AG04449 (cell line): ENCODE measurements at regions of chr1 and their contacts with region 1.

Region 1: GRCh38 chr1:205977402-205978014 is 25.7 kb downstream of the RAB7B start:
- DNase-seq: peak; percentile 66
- H3K4me3 ChIP-seq: no peak overlapping the region
- CTCF ChIP-seq: peak; percentile 94

Region 2: GRCh38 chr1:205354259-205354904 is 623.1 kb before region 1 on chr1:
- CTCF ChIA-PET with region 1: no interaction called
- POLR2A ChIA-PET with region 1: no interaction called
- DNase-seq: no peak
- H3K4me3 ChIP-seq: no peak overlapping the region
- CTCF ChIP-seq: peak; percentile 73

Region 3: DNA sequence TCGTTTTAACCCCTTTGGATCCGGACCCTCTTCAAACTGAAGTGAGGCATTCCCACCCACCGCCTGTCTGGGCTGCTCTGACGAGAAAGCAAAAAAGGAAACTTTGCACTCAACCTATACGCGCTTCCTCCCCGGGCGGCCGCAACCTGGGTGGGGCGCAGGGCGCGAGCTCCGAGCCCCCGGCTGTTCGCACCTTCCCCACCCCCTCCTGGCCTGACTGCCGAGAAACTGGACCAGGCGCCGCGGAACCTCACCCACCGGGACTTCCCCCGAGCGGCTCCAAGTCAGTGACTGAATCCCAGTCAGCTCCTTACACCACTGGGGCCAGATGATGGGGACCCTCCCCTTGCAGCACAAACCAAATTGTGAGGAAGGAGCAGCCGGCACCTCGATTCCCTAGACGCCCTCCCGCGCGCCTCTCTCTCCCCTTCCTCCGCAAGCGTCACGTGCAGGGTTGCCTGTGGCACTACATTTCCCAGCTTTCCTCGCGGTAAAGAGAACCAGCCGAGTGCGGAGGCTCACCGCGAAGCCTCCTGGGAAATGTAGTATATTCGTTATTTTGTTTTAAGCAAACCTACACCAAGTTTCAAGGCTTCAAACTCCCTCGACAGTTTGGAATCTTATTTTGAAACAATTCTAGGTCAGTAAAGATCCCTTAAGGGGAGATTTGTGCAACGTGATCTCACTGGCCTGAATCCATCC is 202.3 kb before region 1 on chr1 and contains the start of gene RAB29:
- CTCF ChIA-PET with region 1: interaction called, 16 read pairs
- POLR2A ChIA-PET with region 1: no interaction called
- DNase-seq: no peak
- H3K4me3 ChIP-seq: peak within 1 kb of the TSS; percentile 82
- CTCF ChIP-seq: no peak

Region 4: GRCh38 chr1:205805082-205805712 is 172.3 kb before region 1 on chr1:
- CTCF ChIA-PET with region 1: interaction called, 25 read pairs
- POLR2A ChIA-PET with region 1: no interaction called
- DNase-seq: no peak
- H3K4me3 ChIP-seq: no peak overlapping the region
- CTCF ChIP-seq: no peak

Region 5: GRCh38 chr1:205907794-205908193 is 69.7 kb before region 1 on chr1:
- CTCF ChIA-PET with region 1: interaction called, 992 read pairs
- POLR2A ChIA-PET with region 1: no interaction called
- DNase-seq: no peak
- H3K4me3 ChIP-seq: no peak overlapping the region
- CTCF ChIP-seq: peak; percentile 73

Region 6: DNA sequence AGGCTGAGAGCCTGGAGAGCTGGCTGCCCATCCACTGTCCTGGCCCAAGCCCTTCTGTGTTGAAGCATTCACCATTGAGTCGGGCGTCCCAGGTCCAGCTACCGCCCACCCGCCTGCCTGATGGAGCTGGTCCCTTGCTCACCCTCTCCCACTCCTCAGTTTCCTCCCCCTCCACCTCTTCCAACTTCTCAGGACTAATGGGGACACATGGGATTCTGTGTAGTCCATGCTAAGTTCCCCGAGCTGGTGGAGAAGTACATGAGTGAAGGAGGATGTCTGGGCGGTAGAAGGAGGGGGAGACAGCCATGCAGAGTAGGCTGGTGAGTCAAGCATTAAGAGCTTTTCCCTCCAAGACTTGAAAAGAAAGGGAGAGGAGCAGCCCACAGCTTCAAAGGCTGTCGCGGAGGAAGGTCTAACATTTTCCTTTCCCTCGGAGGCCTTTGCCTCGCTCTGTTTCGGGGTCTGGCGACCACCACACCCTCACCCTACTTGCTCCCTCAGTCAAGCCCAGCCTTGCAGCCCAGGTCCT is 34.8 kb before region 1 on chr1:
- CTCF ChIA-PET with region 1: interaction called, 23 read pairs
- POLR2A ChIA-PET with region 1: no interaction called
- DNase-seq: no peak
- H3K4me3 ChIP-seq: no peak overlapping the region
- CTCF ChIP-seq: no peak

Region 7: DNA sequence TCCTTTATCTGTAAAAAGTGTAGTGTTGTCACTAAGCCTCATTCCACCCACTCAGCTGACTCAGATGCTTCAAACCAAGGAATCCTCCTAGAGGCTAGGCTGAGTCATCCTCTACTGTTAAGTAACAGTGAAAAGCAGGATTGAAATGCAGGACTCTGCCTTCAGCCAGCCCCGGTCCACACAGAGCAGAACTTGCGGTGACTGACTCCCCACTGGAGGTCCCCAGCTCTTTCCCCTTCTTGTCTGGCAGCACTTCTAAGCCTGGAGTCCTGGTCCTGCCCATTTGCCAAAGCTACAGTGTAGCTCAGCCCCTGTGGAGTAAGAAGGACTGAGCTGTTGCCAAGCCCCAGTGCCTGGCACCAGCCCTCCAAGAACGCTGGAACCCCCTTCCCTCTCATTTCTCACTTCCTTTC is 24.0 kb after region 1 on chr1:
- CTCF ChIA-PET with region 1: interaction called, 231 read pairs
- POLR2A ChIA-PET with region 1: interaction called, 3 read pairs
- DNase-seq: peak; percentile 80
- H3K4me3 ChIP-seq: peak overlapping the region; percentile 33
- CTCF ChIP-seq: no peak

Region 8: GRCh38 chr1:206013026-206013795 is 35.7 kb after region 1 on chr1:
- CTCF ChIA-PET with region 1: no interaction called
- POLR2A ChIA-PET with region 1: no interaction called
- DNase-seq: no peak
- H3K4me3 ChIP-seq: no peak overlapping the region
- CTCF ChIP-seq: no peak

Region 9: GRCh38 chr1:206066479-206067171 is 89.1 kb after region 1 on chr1:
- CTCF ChIA-PET with region 1: no interaction called
- POLR2A ChIA-PET with region 1: no interaction called
- DNase-seq: no peak
- H3K4me3 ChIP-seq: no peak overlapping the region
- CTCF ChIP-seq: no peak

Region 10: DNA sequence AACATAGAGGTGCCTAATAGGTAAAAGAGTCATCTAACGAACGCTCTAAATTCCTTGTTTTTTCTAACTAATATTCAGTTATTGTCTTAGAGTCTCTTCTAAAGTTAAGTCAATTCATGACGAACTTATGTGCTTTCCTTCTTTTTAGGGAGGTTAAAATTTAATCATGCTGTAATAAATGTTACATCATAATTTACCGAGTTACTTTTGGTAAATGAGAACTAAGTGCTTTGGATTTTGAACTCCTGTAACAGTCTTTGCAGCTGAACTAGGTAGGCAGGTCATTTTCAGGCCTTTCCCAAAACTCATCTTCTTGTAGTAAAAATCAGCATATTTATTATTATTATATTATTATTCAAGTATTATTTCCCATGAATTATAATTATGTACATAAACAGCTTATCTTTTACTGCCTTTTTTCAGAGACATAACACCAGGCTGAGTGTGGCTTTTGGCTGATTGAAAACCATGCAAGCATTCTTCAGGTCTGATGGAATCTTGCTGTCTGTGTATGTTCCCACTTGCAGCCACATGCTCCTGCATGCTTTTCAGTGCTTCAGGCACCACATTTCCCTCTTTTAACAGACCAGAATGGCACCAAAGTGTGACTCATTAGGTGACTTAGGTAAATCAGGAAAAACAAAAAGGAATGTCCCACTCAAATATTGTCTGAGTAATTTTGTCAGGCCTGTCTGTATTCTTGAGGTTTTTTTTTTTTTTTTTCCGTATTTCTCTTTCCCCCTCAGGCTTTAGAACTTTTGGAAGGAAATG is 1263.0 kb after region 1 on chr1:
- CTCF ChIA-PET with region 1: no interaction called
- POLR2A ChIA-PET with region 1: no interaction called
- DNase-seq: no peak
- H3K4me3 ChIP-seq: no peak overlapping the region
- CTCF ChIP-seq: no peak